ENCODE measurements at regions of chr20 and their contacts with region 1.

Region 1: DNA sequence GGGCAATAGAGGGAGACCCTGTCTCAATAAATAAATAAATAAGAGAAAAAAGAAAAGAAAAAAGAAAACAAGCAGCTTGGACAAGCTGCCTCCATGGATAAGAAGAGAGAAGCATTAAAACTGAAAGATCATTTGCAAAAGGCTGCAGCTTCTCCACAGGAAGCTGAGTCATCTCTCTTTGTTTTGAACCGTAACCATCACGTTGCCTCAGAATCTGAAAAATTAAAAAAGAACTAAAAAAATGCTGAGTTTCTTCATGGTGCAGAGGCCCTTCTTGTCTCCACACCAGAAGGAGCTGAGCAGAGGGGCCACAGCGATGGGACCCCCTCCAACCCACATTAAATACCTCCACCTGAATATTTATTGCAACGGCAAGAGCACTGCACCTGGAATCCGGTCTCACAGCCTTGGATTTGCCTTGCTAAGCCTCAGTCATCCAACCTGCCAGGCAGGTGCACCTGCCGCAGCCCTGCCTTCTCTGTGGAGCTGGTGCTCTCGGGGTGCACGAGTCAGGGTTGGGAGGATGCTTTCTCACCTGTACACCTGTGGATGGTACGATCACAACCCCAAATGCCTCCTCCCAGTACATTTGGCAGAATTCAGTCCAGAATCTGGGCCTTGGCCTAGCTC is 28.1 kb downstream of the TOX2 start:
- DNase-seq: peak in 4 of 5 donors; percentile 35 to 47 (median 44)
- H3K4me3 ChIP-seq: peak overlapping the region in 1 of 2 donors; percentile 31
- H3K4me3 Mint-ChIP-seq: peak overlapping the region; percentile 37 to 82 (median 62)
- H3K27ac ChIP-seq: no peak overlapping the region
- H3K27ac Mint-ChIP-seq: peak overlapping the region; percentile 77 to 88 (median 82)
- H3K4me1 ChIP-seq: peaks cover 90% of the 10 kb centered on the region
- H3K4me1 Mint-ChIP-seq: peaks cover 43 to 83% (median 61%) of the 10 kb centered on the region in 4 donors
- H3K27me3 ChIP-seq: no peaks in the 10 kb centered on the region
- H3K27me3 Mint-ChIP-seq: peaks cover 0 to 3% of the 10 kb centered on the region in 2 donors

Region 2: DNA sequence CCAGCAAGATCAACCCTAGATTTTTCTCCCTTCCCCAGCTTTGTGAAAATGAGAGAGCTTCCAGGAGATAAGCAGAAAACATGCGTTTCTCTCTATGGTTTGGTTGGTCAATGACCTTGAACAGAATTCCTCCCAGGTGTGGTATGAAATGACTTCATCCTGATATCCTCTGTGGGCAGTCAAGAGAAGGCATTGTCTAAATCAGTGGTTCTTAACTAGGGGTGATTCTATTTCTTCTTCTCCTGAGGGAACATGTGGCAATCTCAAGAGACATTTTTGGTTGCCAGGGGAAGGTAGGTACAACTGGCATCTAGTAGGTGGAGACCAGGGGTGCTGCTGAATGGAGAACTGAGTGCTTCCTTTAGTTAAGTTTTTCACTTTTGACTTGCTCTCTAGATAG is 339.6 kb before region 1 on chr20:
- CTCF ChIA-PET with region 1: no interaction called
- POLR2A ChIA-PET with region 1: no interaction called
- intact Hi-C with region 1: no loop called
- DNase-seq: no peak
- H3K4me3 ChIP-seq: no peak overlapping the region
- H3K4me3 Mint-ChIP-seq: no peak overlapping the region
- H3K27ac ChIP-seq: no peak overlapping the region
- H3K27ac Mint-ChIP-seq: no peak overlapping the region
- H3K4me1 ChIP-seq: no peaks in the 10 kb centered on the region
- H3K4me1 Mint-ChIP-seq: peaks cover 0 to 2% (median 0%) of the 10 kb centered on the region in 4 donors
- H3K27me3 ChIP-seq: no peaks in the 10 kb centered on the region
- H3K27me3 Mint-ChIP-seq: no peaks in the 10 kb centered on the region

Region 3: DNA sequence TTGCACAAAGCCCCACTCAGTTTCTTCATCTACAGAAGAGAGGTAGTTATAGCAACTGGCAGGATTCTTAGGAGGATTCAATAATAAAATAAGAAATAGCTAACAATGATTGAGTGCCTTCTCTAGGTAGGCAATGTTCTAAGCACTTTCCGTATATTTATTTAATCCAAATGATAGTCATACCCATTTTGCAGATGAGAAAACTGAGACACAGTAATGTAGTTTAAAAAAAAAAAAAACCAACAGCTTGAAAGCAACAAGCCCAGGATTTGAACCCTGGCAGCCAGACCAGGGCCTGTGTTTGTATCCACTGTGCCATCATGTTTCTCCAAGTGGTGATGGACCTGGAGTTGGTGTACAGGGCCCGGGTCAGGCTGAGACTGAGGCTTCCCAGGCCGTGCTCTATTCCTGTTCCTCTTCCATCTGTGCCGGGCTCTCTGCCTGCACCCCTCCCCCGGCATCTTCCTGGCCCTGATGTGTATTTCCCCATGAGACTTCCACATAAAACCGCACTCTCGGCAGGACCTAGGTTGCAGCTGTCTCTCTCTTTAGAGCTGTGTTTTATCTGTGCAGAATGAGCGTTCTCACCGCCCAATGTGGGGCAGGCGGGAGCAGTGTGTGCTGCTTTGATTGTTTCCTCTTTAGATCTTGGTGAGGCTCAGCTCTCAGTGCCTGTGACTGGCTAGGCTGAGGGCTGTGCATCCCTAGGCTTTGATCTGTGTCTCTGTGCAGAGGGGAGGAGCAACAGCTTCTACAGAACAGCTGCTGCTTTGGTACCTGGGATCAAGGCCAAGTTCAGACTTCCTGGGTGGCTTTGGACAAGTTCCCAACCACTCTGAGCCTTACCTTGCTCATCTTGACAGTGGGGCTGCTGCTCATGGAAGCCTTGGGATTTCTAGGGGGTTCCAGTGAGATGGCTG is 21.4 kb after region 1 on chr20:
- CTCF ChIA-PET with region 1: no interaction called
- POLR2A ChIA-PET with region 1: interaction called, 22 read pairs
- intact Hi-C with region 1: no loop called
- DNase-seq: peak; percentile 58 to 73 (median 68)
- H3K4me3 ChIP-seq: no peak overlapping the region
- H3K4me3 Mint-ChIP-seq: peak overlapping the region; percentile 7 to 82 (median 67)
- H3K27ac ChIP-seq: no peak overlapping the region
- H3K27ac Mint-ChIP-seq: peak overlapping the region; percentile 16 to 86 (median 67)
- H3K4me1 ChIP-seq: peaks cover 70% of the 10 kb centered on the region
- H3K4me1 Mint-ChIP-seq: peaks cover 28 to 59% (median 37%) of the 10 kb centered on the region in 4 donors
- H3K27me3 ChIP-seq: no peaks in the 10 kb centered on the region
- H3K27me3 Mint-ChIP-seq: peaks cover 0 to 2% of the 10 kb centered on the region in 2 donors

Region 4: DNA sequence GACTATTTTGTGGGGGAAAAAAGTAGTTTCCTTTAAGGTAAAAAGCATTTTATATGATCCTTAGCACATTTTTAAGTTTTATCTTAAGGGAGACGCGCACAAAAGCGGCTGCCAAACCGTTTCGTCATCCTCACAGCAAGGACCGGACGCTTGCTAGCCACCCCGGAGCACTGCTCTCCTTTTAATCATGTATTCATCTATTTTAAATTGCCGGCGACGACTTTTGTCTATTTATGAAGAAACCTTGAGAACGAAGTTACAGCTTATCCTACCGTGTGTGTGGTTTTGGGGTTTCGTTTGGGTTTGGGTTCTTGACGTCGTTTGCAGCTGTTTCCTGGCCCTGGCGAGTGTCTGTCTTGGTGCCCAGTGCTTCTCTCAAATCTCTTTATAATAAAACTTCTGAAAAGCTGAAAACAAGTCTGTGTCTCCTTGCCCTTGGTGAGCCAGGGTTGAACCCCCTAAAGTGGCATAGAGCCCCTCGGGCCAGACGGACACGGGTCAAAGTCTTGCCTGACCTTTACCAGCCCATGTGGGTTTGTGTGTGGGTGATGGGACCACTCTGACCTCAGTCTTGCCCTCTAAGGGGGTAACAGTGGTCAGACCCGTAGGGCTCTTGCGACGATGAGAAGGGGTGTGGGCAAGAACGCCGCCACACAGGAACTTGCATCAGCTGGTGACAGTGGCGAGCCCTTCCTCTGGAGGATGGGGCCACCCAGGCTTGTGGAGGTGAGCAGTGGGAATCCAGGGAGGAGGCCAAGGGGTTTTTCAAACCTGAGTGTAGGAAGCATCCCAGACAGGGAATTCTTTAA is 126.6 kb after region 1 on chr20:
- CTCF ChIA-PET with region 1: no interaction called
- POLR2A ChIA-PET with region 1: interaction called, 9 read pairs
- intact Hi-C with region 1: loop called (anchors 5 kb)
- DNase-seq: peak; percentile 77 to 89 (median 84)
- H3K4me3 ChIP-seq: peak overlapping the region; percentile 40 to 57
- H3K4me3 Mint-ChIP-seq: peak overlapping the region; percentile 83 to 92 (median 88)
- H3K27ac ChIP-seq: peak overlapping the region; percentile 55
- H3K27ac Mint-ChIP-seq: peak overlapping the region; percentile 87 to 99 (median 98)
- H3K4me1 ChIP-seq: peaks cover 57% of the 10 kb centered on the region
- H3K4me1 Mint-ChIP-seq: peaks cover 23 to 68% (median 44%) of the 10 kb centered on the region in 4 donors
- H3K27me3 ChIP-seq: no peaks in the 10 kb centered on the region
- H3K27me3 Mint-ChIP-seq: no peaks in the 10 kb centered on the region